H1 (cell line): ENCODE measurements at regions of chr6 and their contacts with region 1.

Region 1: DNA sequence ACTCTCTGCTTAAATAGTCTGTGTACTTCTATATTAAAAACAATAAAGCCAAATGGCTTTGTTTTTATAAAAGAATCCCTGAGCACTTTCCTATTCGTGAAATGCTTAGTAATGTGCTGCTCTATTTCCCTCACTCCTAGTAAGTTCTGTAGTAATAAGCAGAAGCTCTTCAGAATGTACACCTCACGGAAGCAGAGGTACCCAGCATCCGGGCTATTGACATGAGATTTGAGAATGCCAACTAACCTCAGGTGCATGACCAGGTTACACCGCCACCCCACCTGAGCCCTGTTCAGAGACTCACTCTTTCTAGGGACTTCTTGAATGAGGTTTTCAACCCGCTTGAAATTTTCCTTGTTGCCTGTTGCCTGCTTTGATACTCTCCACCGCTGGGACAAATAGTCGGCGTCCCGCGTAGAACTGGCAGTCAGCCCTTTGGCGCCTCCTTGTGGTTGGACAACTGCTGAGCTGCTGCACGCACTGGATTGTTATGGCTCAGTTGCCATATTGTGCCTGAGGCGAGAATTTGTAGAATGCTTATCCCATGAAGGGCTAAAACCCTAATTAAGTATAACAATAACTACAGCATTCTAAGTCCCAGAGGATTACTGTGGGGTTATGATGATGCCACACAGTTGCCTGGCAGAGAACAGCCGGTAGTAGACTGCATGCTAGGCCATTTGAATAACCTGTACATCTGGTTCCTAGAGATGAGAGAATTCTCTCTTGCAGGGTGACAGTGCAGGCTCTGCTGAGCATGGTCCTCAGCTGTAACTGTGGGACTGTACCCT is 95.4 kb downstream of the KHDC1L start:
- DNase-seq: peak; percentile 53 to 94
- H3K4me3 ChIP-seq: no peak overlapping the region
- H3K27ac ChIP-seq: no peak overlapping the region
- H3K4me1 ChIP-seq: no peaks in the 10 kb centered on the region
- H3K27me3 ChIP-seq: no peaks in the 10 kb centered on the region
- CTCF ChIP-seq: peak; percentile 97 to 99 (median 97)
- EP300 ChIP-seq: no peak
- POLR2A ChIP-seq: no peak
- RAD21 ChIP-seq: peak; percentile 99

Region 2: GRCh38 chr6:72411872-72412708 is 717.8 kb before region 1 on chr6:
- CTCF ChIA-PET with region 1: interaction called, 20 read pairs
- POLR2A ChIA-PET with region 1: no interaction called
- DNase-seq: peak; percentile 62 to 94
- H3K4me3 ChIP-seq: no peak overlapping the region
- H3K27ac ChIP-seq: no peak overlapping the region
- H3K4me1 ChIP-seq: no peaks in the 10 kb centered on the region
- H3K27me3 ChIP-seq: no peaks in the 10 kb centered on the region
- CTCF ChIP-seq: peak; percentile 99 to 100 (median 100)
- EP300 ChIP-seq: no peak
- POLR2A ChIP-seq: no peak
- RAD21 ChIP-seq: peak; percentile 100

Region 3: GRCh38 chr6:72622094-72622940 is 507.5 kb before region 1 on chr6:
- CTCF ChIA-PET with region 1: interaction called, 168 read pairs
- POLR2A ChIA-PET with region 1: no interaction called
- DNase-seq: peak in 1 of 2 experiments; percentile 78
- H3K4me3 ChIP-seq: peak overlapping the region; percentile 25 to 78 (median 62)
- H3K27ac ChIP-seq: no peak overlapping the region
- H3K4me1 ChIP-seq: peaks cover 0 to 17% (median 6%) of the 10 kb centered on the region in 4 experiments; a peak in 4 of 7 replicates
- H3K27me3 ChIP-seq: peaks cover 25 to 54% (median 45%) of the 10 kb centered on the region in 4 experiments
- CTCF ChIP-seq: peak in 2 of 3 experiments; percentile 25 to 36; a peak in 3 of 4 replicates
- EP300 ChIP-seq: no peak
- POLR2A ChIP-seq: no peak
- RAD21 ChIP-seq: peak; percentile 8 to 12; a peak in 3 of 4 replicates

Region 4: GRCh38 chr6:72689107-72689954 is 440.5 kb before region 1 on chr6:
- CTCF ChIA-PET with region 1: interaction called, 10 read pairs
- POLR2A ChIA-PET with region 1: no interaction called
- DNase-seq: no peak
- H3K4me3 ChIP-seq: no peak overlapping the region
- H3K27ac ChIP-seq: no peak overlapping the region
- H3K4me1 ChIP-seq: no peaks in the 10 kb centered on the region
- H3K27me3 ChIP-seq: no peaks in the 10 kb centered on the region
- CTCF ChIP-seq: no peak
- EP300 ChIP-seq: no peak
- POLR2A ChIP-seq: no peak
- RAD21 ChIP-seq: no peak

Region 5: GRCh38 chr6:73036689-73037088 is 93.2 kb before region 1 on chr6:
- CTCF ChIA-PET with region 1: no interaction called
- POLR2A ChIA-PET with region 1: no interaction called
- DNase-seq: no peak
- H3K4me3 ChIP-seq: no peak overlapping the region
- H3K27ac ChIP-seq: no peak overlapping the region
- H3K4me1 ChIP-seq: no peaks in the 10 kb centered on the region
- H3K27me3 ChIP-seq: no peaks in the 10 kb centered on the region
- CTCF ChIP-seq: no peak
- EP300 ChIP-seq: no peak
- POLR2A ChIP-seq: no peak
- RAD21 ChIP-seq: no peak

Region 6: DNA sequence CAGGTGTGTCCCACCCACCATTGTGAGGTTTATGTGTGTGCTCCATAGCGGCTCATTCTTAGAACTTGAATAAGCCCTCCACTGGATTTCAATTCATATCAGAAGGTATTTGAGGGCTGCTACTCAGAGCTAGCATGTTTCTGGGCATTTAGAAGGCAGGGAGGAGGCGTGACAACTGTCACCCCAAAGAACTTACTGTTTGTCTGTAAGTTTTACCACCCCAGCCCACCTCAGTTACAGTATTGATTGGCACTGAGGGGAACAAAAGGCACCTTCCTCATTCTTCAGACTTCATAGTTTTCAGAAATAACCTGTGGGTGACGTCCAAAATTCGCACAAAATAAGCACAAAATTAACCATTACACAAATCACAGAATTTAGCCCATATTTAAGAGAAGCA is 13.7 kb after region 1 on chr6:
- CTCF ChIA-PET with region 1: interaction called, 31 read pairs
- POLR2A ChIA-PET with region 1: no interaction called
- DNase-seq: no peak
- H3K4me3 ChIP-seq: no peak overlapping the region
- H3K27ac ChIP-seq: no peak overlapping the region
- H3K4me1 ChIP-seq: no peaks in the 10 kb centered on the region
- H3K27me3 ChIP-seq: no peaks in the 10 kb centered on the region
- CTCF ChIP-seq: no peak
- EP300 ChIP-seq: no peak
- POLR2A ChIP-seq: no peak
- RAD21 ChIP-seq: no peak

Region 7: GRCh38 chr6:73152966-73153757 is 23.3 kb after region 1 on chr6:
- CTCF ChIA-PET with region 1: interaction called, 11 read pairs
- POLR2A ChIA-PET with region 1: no interaction called
- DNase-seq: no peak
- H3K4me3 ChIP-seq: no peak overlapping the region
- H3K27ac ChIP-seq: no peak overlapping the region
- H3K4me1 ChIP-seq: no peaks in the 10 kb centered on the region
- H3K27me3 ChIP-seq: no peaks in the 10 kb centered on the region
- CTCF ChIP-seq: no peak
- EP300 ChIP-seq: no peak
- POLR2A ChIP-seq: no peak
- RAD21 ChIP-seq: no peak